ENCODE measurements at regions of chr5 and their contacts with region 1.

Region 1: GRCh38 chr5:64603676-64604075 is 86.6 kb upstream of the SHISAL2B start:
- DNase-seq: no peak
- ATAC-seq: no peak

Region 2: GRCh38 chr5:64074533-64074932 is 529.1 kb before region 1 on chr5:
- intact Hi-C with region 1: loop called in 1 of 2 experiments (anchors 10 kb)
- DNase-seq: no peak
- ATAC-seq: peak in 1 of 2 donors; percentile 45

Region 3: GRCh38 chr5:64364426-64364825 is 239.2 kb before region 1 on chr5:
- intact Hi-C with region 1: no loop called
- DNase-seq: no peak
- ATAC-seq: peak in 1 of 2 donors; percentile 50

Region 4: GRCh38 chr5:64625678-64626077 is 22.0 kb after region 1 on chr5:
- intact Hi-C with region 1: no loop called
- DNase-seq: no peak
- ATAC-seq: no peak

Region 5: GRCh38 chr5:64653766-64654560 is 50.3 kb after region 1 on chr5:
- intact Hi-C with region 1: no loop called
- DNase-seq: no peak
- ATAC-seq: no peak